ENCODE measurements at regions of chr6 and their contacts with region 1.

Region 1: DNA sequence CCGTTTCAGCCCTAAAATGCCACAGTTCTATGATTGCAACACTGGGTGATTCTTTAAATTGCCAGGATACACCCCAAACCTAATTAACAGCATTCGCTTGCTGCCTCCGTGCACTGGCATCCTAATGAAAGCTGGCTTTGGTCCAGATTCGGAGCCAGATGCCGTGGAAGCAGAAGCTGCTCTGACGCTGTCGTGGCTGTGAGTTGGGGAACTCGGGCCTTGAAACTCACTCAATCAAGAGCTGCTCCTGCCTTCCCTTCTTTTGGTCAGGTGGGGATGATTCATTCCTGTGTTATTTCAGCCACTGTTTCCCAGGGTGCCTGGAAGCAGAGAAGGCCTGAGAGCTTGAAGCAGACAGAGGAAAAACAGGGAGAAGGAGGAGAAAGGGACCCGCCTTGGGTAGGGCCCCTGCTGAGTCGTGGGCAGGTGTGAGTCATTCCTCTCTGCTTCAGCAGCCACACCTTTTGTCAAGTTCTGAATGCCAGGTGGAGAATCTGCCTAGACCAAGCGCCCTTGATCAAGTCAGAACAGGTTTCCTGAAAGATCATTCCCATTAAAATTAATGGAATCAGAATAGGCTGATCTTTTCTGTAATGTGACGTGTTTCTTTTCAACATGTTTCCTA is 36.2 kb upstream of the DSP start:
- DNase-seq: peak; percentile 93 to 97
- H3K4me3 ChIP-seq: peak overlapping the region; percentile 17; the same call in 1 of the 2 replicates
- H3K27ac ChIP-seq: peak overlapping the region; percentile 88
- H3K4me1 ChIP-seq: peaks cover 20% of the 10 kb centered on the region
- H3K27me3 ChIP-seq: no peaks in the 10 kb centered on the region
- CTCF ChIP-seq: no peak

Region 2: DNA sequence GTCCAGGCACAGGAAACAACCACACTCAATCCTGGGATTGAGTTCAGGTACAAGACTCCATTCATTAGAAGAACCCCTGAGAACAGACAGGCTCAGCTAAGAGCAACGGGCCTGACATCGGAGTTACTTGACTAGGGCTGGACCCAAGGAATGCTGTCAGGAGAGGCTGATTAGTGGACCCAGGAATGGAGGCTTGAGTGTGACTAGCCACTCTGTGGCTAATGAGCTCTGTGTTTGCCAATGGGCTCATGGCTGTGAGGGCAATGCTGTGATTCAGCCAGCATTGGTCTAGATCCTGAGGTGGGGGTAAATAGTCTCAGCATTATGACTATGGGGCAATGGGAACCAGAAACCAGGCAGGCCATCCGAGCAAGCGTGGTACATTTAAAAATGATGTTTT is 43.9 kb before region 1 on chr6:
- CTCF ChIA-PET with region 1: no interaction called
- POLR2A ChIA-PET with region 1: no interaction called
- intact Hi-C with region 1: no loop called
- DNase-seq: no peak
- H3K4me3 ChIP-seq: no peak overlapping the region
- H3K27ac ChIP-seq: no peak overlapping the region
- H3K4me1 ChIP-seq: no peaks in the 10 kb centered on the region
- H3K27me3 ChIP-seq: no peaks in the 10 kb centered on the region
- CTCF ChIP-seq: no peak

Region 3: DNA sequence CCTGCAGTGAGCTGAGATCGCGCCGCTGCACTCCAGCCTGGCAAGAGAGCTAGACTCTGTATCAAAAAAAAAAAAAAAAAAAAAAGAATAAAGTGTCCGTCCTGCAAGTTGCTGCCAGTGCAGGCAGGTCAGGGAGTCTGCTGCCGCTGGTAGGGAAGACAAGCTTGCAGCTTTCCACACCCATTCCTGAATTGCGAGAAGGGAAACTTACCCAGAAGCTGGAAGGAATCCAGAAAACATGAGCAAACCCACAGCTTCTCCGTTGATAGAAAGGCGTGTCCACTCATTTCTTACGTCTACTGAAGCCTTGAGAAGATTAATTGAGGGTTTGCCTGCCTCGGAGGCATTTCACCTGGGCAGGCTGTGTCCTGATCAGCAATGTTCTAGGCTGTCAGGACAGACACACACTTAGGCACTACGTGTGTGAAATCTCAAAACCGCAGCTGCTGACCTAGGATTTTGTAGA is 25.5 kb before region 1 on chr6:
- CTCF ChIA-PET with region 1: no interaction called
- POLR2A ChIA-PET with region 1: no interaction called
- intact Hi-C with region 1: loop called (anchors 2 kb)
- DNase-seq: peak; percentile 83 to 95
- H3K4me3 ChIP-seq: peak overlapping the region; percentile 37; the same call in 1 of the 2 replicates
- H3K27ac ChIP-seq: peak overlapping the region; percentile 35; the same call in 1 of the 2 replicates
- H3K4me1 ChIP-seq: no peaks in the 10 kb centered on the region
- H3K27me3 ChIP-seq: no peaks in the 10 kb centered on the region
- CTCF ChIP-seq: no peak

Region 4: DNA sequence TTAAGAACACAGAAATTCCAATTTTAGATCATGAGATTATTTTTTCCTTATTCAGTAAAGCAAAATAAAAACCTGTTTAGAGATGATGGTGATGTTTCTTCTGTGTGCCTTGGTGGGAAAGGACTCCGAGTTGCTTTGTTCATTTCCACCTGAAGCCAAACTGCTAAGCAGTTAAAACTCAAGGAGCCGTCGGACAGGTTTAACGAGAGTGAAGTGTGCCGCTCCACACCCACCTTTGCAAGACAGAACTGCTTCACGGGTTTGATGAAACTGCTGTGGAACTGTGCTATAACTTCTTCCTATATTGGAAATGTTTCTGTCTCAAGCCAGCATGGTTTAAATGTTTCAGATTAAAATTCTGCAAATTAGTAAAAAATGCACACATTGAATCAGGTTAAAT is 26.9 kb after region 1 on chr6:
- CTCF ChIA-PET with region 1: interaction called, 7 read pairs
- POLR2A ChIA-PET with region 1: no interaction called
- intact Hi-C with region 1: loop called (anchors 2 kb)
- DNase-seq: peak; percentile 72 to 77
- H3K4me3 ChIP-seq: peak overlapping the region; percentile 24; the same call in 1 of the 2 replicates
- H3K27ac ChIP-seq: peak overlapping the region; percentile 44
- H3K4me1 ChIP-seq: peaks cover 17% of the 10 kb centered on the region
- H3K27me3 ChIP-seq: no peaks in the 10 kb centered on the region
- CTCF ChIP-seq: no peak

Region 5: GRCh38 chr6:7546896-7547295 is 41.6 kb after region 1 on chr6:
- CTCF ChIA-PET with region 1: no interaction called
- POLR2A ChIA-PET with region 1: no interaction called
- intact Hi-C with region 1: loop called (anchors 1 kb)
- DNase-seq: peak in 1 of 2 experiments; percentile 25
- H3K4me3 ChIP-seq: no peak overlapping the region
- H3K27ac ChIP-seq: no peak overlapping the region
- H3K4me1 ChIP-seq: peaks cover 45% of the 10 kb centered on the region
- H3K27me3 ChIP-seq: no peaks in the 10 kb centered on the region
- CTCF ChIP-seq: no peak

Region 6: GRCh38 chr6:7640607-7641577 is 135.6 kb after region 1 on chr6:
- CTCF ChIA-PET with region 1: no interaction called
- POLR2A ChIA-PET with region 1: no interaction called
- intact Hi-C with region 1: no loop called
- DNase-seq: peak; percentile 9 to 79
- H3K4me3 ChIP-seq: no peak overlapping the region
- H3K27ac ChIP-seq: peak overlapping the region; percentile 57
- H3K4me1 ChIP-seq: peaks cover 32% of the 10 kb centered on the region
- H3K27me3 ChIP-seq: no peaks in the 10 kb centered on the region
- CTCF ChIP-seq: no peak

Measured in PC-9 (cell line).